Dorsolateral prefrontal cortex (tissue), 120 donors: ENCODE measurements at regions of chr5 and their contacts with region 1.

Region 1: GRCh38 chr5:172412724-172413286 is 41.5 kb downstream of the SH3PXD2B start:
- DNase-seq: peak in 5 of 10 donors; percentile 35 to 72 (median 54)
- H3K4me3 ChIP-seq: no peak overlapping the region
- H3K27ac ChIP-seq: peak overlapping the region in 57 of 59 donors; percentile 6 to 87 (median 72)
- H3K27me3 ChIP-seq: no peaks in the 10 kb centered on the region
- CTCF ChIP-seq: peak in 1 of 56 donors; percentile 13

Region 2: DNA sequence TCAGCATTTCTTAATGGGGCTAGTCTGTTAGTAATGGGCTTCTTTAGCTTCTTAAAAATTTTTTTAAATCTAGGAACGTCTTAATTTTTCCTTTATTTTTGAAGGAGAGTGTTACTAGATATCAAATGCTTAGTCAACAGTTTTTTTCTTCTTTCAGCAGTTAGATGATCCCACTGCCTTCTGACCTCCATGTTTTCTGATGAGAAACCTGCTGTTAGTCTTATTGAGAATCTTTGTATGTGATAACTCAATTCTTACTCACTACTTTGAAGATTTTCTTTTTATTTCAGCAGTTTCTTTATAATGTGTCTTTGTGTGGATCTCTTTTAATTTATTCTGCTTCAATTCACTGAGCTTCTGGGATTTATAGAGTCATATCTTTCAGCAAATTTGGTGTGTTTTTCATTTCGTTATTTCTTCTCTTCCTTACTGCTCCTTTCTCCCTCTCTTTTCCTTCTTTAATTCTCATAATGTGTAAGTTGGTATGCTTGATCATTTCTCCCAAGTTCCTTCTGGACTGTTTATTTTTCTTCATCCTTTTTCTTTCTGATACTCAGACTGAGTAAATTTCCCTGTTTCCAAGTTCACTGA is 1345.2 kb before region 1 on chr5:
- intact Hi-C with region 1: no loop called
- DNase-seq: no peak
- H3K4me3 ChIP-seq: no peak overlapping the region
- H3K27ac ChIP-seq: no peak overlapping the region
- H3K27me3 ChIP-seq: no peaks in the 10 kb centered on the region
- CTCF ChIP-seq: no peak

Region 3: GRCh38 chr5:172380987-172381643 is 31.7 kb before region 1 on chr5:
- intact Hi-C with region 1: loop called in 1 of 2 experiments (anchors 1 kb)
- DNase-seq: peak; percentile 84 to 94 (median 90)
- H3K4me3 ChIP-seq: peak overlapping the region in 46 of 59 donors; percentile 2 to 57 (median 36)
- H3K27ac ChIP-seq: peak overlapping the region in 55 of 59 donors; percentile 5 to 84 (median 65)
- H3K27me3 ChIP-seq: no peaks in the 10 kb centered on the region
- CTCF ChIP-seq: peak in 7 of 56 donors; percentile 11 to 35 (median 20)

Region 4: DNA sequence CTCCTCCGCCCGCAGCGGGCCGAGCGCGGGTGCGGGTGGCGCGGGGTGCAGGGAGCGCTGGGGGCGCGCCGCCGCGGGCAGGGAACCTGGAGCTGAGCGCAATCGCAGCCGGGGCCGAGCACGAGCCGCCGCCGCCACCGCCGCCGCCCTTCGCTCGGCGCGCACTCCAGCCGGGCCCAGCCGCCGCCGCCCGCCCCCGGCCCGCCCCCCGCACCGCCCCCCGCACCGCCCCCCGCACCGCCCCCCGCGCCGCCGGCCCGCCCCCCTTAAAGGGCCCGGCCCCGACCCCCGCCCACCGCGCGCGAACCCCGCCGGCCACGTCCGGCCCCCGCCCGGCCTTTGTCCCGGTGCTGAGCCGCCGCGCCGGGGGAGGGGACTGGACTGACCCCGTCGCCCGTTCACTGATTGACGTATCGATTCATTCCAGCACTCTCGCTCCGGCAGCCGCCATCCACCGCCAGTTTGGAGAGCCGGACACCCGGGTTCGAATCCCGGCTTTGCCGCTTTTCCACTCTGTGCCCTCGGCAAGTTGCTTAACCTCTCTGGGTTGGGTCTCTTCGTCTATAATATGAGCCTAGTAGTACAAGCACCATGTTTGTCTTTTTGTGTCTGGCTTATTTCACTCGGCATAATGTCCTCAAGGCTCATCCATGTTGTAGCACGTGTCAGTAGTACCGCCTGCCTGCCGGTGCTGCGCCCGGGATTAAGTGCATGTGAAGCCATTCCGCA is 41.7 kb after region 1 on chr5 and contains the start of gene SH3PXD2B:
- intact Hi-C with region 1: loop called in 1 of 2 experiments (anchors 5 kb)
- DNase-seq: peak in 6 of 10 donors; percentile 46 to 79 (median 62)
- H3K4me3 ChIP-seq: peak within 1 kb of the TSS; percentile 61 to 94 (median 79)
- H3K27ac ChIP-seq: peak within 1 kb of the TSS; percentile 29 to 95 (median 86)
- H3K27me3 ChIP-seq: no peaks in the 10 kb centered on the region
- CTCF ChIP-seq: no peak
- total RNA-seq, gene SH3PXD2B: 9.2 to 63.2 (median 19.7) TPM

Region 5: GRCh38 chr5:172479044-172479783 is 66.4 kb after region 1 on chr5:
- intact Hi-C with region 1: no loop called
- DNase-seq: peak; percentile 59 to 92 (median 84)
- H3K4me3 ChIP-seq: peak overlapping the region in 2 of 59 donors; percentile 6 to 20
- H3K27ac ChIP-seq: peak overlapping the region in 18 of 59 donors; percentile 0 to 46 (median 22)
- H3K27me3 ChIP-seq: no peaks in the 10 kb centered on the region
- CTCF ChIP-seq: peak; percentile 60 to 97 (median 90)